A549 (cell line): ENCODE measurements at regions of chr10 and their contacts with region 1.

Region 1: DNA sequence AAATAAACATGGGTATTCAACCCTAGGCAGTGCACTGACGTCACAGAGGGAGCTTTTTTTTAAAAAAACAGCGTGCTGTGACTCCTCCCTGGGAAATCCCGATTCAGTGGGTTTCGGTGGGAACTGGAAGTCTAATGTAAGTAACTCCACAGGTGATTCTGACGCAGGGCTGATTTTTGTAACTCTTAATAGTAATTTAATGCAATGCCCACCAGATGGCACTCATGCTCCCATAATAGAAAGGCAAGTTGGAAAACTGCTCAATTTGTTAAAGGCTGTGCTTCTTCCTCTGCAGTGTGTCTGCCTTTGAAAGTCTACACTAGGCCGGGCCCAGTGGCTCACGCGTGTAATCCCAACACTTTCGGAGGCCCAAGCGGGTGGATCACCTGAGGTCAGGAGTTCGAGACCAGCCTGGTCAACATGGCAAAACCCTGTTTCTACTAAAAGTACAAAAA is 10.9 kb upstream of the RSU1 start:
- DNase-seq: peak; percentile 22 to 79
- ATAC-seq: peak; percentile 77 to 87; a peak in 5 of 6 replicates
- H3K4me3 ChIP-seq: no peak overlapping the region
- H3K27ac ChIP-seq: no peak overlapping the region
- H3K4me1 ChIP-seq: no peaks in the 10 kb centered on the region
- CTCF ChIP-seq: peak; percentile 74
- EP300 ChIP-seq: no peak
- POLR2A ChIP-seq: no peak
- RAD21 ChIP-seq: peak; percentile 78 to 79

Region 2: DNA sequence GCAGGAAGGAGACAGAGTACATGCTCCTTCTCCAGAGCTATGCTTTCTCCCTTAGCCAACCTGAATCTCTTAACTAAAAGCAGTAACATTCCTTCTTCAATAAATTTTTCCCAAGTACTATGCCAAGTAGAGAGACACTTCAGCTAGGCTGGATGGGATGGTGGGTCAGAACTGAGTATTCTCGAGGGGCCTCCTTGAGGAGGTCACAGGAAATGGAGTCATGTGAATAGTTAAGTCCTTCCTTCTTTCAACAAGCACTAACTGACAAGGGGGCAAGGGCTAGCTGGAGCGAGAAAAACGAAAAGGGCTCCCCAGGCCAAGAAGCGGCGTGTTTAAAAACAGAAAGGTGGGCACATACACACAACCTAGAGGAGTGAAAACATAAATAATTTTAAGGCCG is 16.4 kb before region 1 on chr10:
- CTCF ChIA-PET with region 1: interaction called, 11 read pairs
- POLR2A ChIA-PET with region 1: no interaction called
- DNase-seq: no peak
- ATAC-seq: no peak
- H3K4me3 ChIP-seq: no peak overlapping the region
- H3K27ac ChIP-seq: no peak overlapping the region
- H3K4me1 ChIP-seq: peaks cover 11% of the 10 kb centered on the region; the same call in 2 of the 3 replicates
- CTCF ChIP-seq: no peak
- EP300 ChIP-seq: no peak
- POLR2A ChIP-seq: no peak
- RAD21 ChIP-seq: no peak

Region 3: DNA sequence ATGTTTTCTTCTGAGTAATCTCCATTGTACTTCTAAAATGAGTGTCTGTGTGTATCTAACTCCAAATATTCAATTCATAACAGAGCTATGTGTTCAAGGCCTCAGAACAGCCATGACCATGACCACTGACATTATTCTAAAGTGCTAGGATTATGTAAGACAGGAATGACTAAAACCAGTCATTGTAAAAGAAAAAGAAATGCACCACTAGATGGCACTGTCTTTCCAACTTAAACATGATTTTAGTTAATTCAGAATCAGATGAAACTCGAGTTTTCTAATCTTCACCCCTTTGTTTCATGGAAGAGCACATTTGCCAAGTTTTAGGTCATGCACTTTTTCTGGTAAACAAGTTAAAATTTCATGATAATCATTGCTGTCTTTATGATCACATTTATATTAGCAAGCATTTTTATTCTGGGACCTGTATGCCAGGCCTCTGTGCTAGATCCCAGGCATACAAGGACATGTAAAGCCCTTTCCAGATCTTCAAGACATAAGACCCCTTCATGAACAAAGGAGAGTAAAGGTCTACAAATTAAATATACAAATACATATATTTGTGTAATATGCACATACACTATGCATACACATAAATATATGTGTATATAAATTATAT is 15.2 kb after region 1 on chr10:
- CTCF ChIA-PET with region 1: interaction called, 13 read pairs
- POLR2A ChIA-PET with region 1: no interaction called
- DNase-seq: peak; percentile 28 to 72
- ATAC-seq: peak; percentile 78 to 86; a peak in 5 of 6 replicates
- H3K4me3 ChIP-seq: no peak overlapping the region
- H3K27ac ChIP-seq: no peak overlapping the region
- H3K4me1 ChIP-seq: no peaks in the 10 kb centered on the region
- CTCF ChIP-seq: peak; percentile 83
- EP300 ChIP-seq: no peak
- POLR2A ChIP-seq: no peak
- RAD21 ChIP-seq: peak; percentile 80 to 89

Region 4: GRCh38 chr10:17257466-17258321 is 429.6 kb after region 1 on chr10:
- CTCF ChIA-PET with region 1: interaction called, 31 read pairs
- POLR2A ChIA-PET with region 1: no interaction called
- DNase-seq: peak; percentile 52 to 69
- ATAC-seq: peak; percentile 85 to 97
- H3K4me3 ChIP-seq: 0 out of 3 replicates have a peak overlapping the region, but pooled peaks have one; percentile 6
- H3K27ac ChIP-seq: no peak overlapping the region
- H3K4me1 ChIP-seq: no peaks in the 10 kb centered on the region
- CTCF ChIP-seq: peak; percentile 96
- EP300 ChIP-seq: no peak
- POLR2A ChIP-seq: no peak
- RAD21 ChIP-seq: peak; percentile 96 to 97

Region 5: GRCh38 chr10:17430647-17431355 is 602.7 kb after region 1 on chr10:
- CTCF ChIA-PET with region 1: interaction called, 12 read pairs
- POLR2A ChIA-PET with region 1: no interaction called
- DNase-seq: peak; percentile 44 to 69
- ATAC-seq: peak; percentile 86 to 95; a peak in 5 of 6 replicates
- H3K4me3 ChIP-seq: no peak overlapping the region
- H3K27ac ChIP-seq: no peak overlapping the region
- H3K4me1 ChIP-seq: no peaks in the 10 kb centered on the region
- CTCF ChIP-seq: peak; percentile 87
- EP300 ChIP-seq: no peak
- POLR2A ChIP-seq: no peak
- RAD21 ChIP-seq: peak; percentile 78 to 80